ENCODE measurements at regions of chr12 and their contacts with region 1.

Region 1: GRCh38 chr12:53159195-53159839 is 21.2 kb upstream of the ZNF740 start:
- DNase-seq: peak; percentile 95
- ATAC-seq: peak; percentile 99
- H3K4me3 Mint-ChIP-seq: no peak overlapping the region
- H3K27ac Mint-ChIP-seq: peak overlapping the region; percentile 81
- H3K4me1 Mint-ChIP-seq: peaks cover 18% of the 10 kb centered on the region
- H3K27me3 Mint-ChIP-seq: no peaks in the 10 kb centered on the region

Region 2: DNA sequence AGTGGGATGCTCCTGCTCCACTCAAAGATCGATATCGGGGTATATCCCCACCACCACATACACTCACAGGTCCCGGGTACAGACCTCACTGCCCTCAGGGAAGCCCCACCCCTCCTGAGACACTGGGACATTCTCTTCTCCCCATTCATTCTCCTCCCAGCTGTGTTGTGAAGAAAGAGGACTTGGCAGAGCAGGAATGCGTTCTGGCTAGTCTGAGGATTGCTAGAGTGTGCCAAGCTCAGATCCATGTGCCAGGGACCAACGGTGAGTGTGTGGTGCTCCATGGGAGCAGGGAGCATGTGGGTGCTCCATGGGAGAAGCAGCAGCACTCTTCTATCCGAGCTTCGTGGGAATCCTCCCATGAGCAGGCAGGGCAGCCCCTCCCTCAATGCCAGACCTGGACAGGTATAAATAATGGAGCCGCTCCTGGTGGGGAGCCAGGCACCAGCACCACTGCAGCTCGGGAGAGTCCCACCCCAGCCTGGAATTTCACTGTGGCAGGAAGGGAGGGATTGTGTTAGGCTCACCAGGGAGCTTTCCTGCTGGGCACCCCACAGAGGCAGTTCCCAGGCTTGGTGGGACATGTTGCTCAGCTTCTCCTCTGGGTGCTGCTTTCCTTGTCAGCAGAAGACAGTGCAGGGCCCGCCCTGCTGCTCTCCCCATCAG is 636.8 kb before region 1 on chr12:
- CTCF ChIA-PET with region 1: no interaction called
- POLR2A ChIA-PET with region 1: no interaction called
- DNase-seq: peak; percentile 8
- ATAC-seq: no peak
- H3K4me3 Mint-ChIP-seq: no peak overlapping the region
- H3K27ac Mint-ChIP-seq: no peak overlapping the region
- H3K4me1 Mint-ChIP-seq: peaks cover 13% of the 10 kb centered on the region
- H3K27me3 Mint-ChIP-seq: peaks cover 6% of the 10 kb centered on the region

Region 3: DNA sequence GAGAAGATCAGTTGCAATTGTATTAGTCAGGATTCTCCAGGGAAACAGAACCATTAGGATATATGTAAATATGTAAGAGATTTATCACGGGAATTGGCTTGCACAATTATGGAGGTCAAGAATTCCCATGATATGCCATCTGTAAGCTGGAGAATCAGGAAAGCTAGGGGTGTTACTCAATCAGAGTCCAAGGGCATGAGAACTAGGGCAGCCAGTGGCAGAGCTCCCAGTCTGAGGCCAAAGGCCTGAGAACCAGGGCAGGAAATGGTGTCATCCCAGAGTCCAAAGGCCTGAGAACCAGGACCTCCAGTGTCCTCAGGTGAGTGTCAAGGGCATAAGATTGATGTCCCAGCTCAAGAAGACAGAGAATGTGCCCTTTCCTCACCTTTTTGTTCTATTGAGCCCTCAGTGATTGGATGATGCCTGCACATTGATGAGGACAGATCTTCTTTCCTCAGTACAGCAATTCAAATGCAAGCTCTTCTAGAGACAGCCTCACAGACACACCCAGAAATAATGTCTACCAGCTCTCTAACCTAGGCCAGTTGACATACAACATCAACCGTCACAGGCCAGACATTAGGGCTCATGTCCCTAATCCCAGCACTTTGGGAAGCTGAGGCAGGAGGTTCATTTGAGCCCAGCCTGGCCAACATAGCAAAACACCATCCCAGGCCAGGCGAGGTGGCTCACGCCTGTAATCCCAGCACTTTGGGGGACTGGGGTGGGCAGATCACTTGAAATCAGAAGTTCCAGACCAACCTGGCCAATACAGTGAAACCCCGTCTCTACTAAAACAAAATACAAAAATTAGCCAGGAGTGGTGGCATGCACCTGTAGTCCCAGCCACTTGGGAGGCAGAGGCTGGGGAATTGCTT is 13.7 kb before region 1 on chr12:
- CTCF ChIA-PET with region 1: interaction called, 10 read pairs
- POLR2A ChIA-PET with region 1: no interaction called
- DNase-seq: no peak
- ATAC-seq: no peak
- H3K4me3 Mint-ChIP-seq: no peak overlapping the region
- H3K27ac Mint-ChIP-seq: no peak overlapping the region
- H3K4me1 Mint-ChIP-seq: no peaks in the 10 kb centered on the region
- H3K27me3 Mint-ChIP-seq: peaks cover 7% of the 10 kb centered on the region

Region 4: GRCh38 chr12:53190108-53190729 is 30.9 kb after region 1 on chr12:
- CTCF ChIA-PET with region 1: interaction called, 41 read pairs
- POLR2A ChIA-PET with region 1: interaction called, 6 read pairs
- DNase-seq: peak; percentile 59
- ATAC-seq: peak; percentile 87
- H3K4me3 Mint-ChIP-seq: no peak overlapping the region
- H3K27ac Mint-ChIP-seq: peak overlapping the region; percentile 42
- H3K4me1 Mint-ChIP-seq: peaks cover 35% of the 10 kb centered on the region
- H3K27me3 Mint-ChIP-seq: no peaks in the 10 kb centered on the region

Region 5: DNA sequence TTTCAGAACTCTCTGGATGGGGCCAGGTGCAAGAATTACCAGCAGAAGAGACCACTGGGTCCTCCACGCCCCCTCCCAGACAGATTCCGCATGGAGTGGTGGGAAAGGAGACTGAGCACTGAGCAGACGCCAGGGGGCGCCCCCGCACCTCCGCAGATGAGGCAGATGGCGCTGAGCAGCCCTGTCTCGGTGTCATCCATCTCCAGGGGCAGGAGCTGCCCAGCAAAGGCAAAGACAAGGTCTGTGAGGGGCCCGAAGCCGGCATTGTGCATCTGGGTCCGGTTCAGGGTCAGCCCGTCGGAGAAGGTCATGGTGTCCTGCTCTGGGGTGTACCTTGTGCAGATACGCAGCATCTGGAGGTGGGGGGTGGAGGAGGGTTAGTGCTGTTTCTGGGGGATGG is 54.0 kb after region 1 on chr12:
- CTCF ChIA-PET with region 1: interaction called, 30 read pairs
- POLR2A ChIA-PET with region 1: no interaction called
- DNase-seq: peak; percentile 88
- ATAC-seq: peak; percentile 64
- H3K4me3 Mint-ChIP-seq: no peak overlapping the region
- H3K27ac Mint-ChIP-seq: peak overlapping the region; percentile 65
- H3K4me1 Mint-ChIP-seq: peaks cover 92% of the 10 kb centered on the region
- H3K27me3 Mint-ChIP-seq: no peaks in the 10 kb centered on the region

Region 6: GRCh38 chr12:53267999-53268647 is 108.8 kb after region 1 on chr12 and contains the start of gene ESPL1:
- CTCF ChIA-PET with region 1: interaction called, 52 read pairs
- POLR2A ChIA-PET with region 1: interaction called, 5 read pairs
- DNase-seq: peak; percentile 93
- ATAC-seq: peak; percentile 95
- H3K4me3 Mint-ChIP-seq: peak within 1 kb of the TSS; percentile 98
- H3K27ac Mint-ChIP-seq: peak within 1 kb of the TSS; percentile 98
- H3K4me1 Mint-ChIP-seq: peaks cover 47% of the 10 kb centered on the region
- H3K27me3 Mint-ChIP-seq: no peaks in the 10 kb centered on the region
- total RNA-seq, gene ESPL1: 126 TPM

Region 7: GRCh38 chr12:53344824-53345485 is 185.6 kb after region 1 on chr12:
- CTCF ChIA-PET with region 1: interaction called, 19 read pairs
- POLR2A ChIA-PET with region 1: no interaction called
- DNase-seq: peak; percentile 78
- ATAC-seq: peak; percentile 85
- H3K4me3 Mint-ChIP-seq: peak overlapping the region; percentile 92
- H3K27ac Mint-ChIP-seq: peak overlapping the region; percentile 91
- H3K4me1 Mint-ChIP-seq: peaks cover 17% of the 10 kb centered on the region
- H3K27me3 Mint-ChIP-seq: peaks cover 9% of the 10 kb centered on the region

Region 8: GRCh38 chr12:53391729-53392128 is 232.4 kb after region 1 on chr12:
- CTCF ChIA-PET with region 1: no interaction called
- POLR2A ChIA-PET with region 1: no interaction called
- DNase-seq: no peak
- ATAC-seq: no peak
- H3K4me3 Mint-ChIP-seq: no peak overlapping the region
- H3K27ac Mint-ChIP-seq: no peak overlapping the region
- H3K4me1 Mint-ChIP-seq: peaks cover 36% of the 10 kb centered on the region
- H3K27me3 Mint-ChIP-seq: no peaks in the 10 kb centered on the region

Measured in activated CD8-positive, alpha-beta T cell treated with anti-CD3 and anti-CD28 coated beads, Interleukin-2, amount 10 ng/mL, durations not matched to agents 7 days and 5 days (primary cell).